Natural killer cell (primary cell): ENCODE measurements at regions of chr3 and their contacts with region 1.

Region 1: GRCh38 chr3:121749276-121750086 is at the start of gene GOLGB1:
- DNase-seq: peak; percentile 84 to 98
- ATAC-seq: peak; percentile 91 to 99 (median 93)
- H3K4me3 ChIP-seq: peak within 1 kb of the TSS; percentile 92
- H3K4me3 Mint-ChIP-seq: peak within 1 kb of the TSS; percentile 57
- H3K27ac ChIP-seq: peak within 1 kb of the TSS; percentile 98
- H3K27ac Mint-ChIP-seq: no peak within 1 kb of the TSS
- H3K4me1 ChIP-seq: peaks cover 12% of the 10 kb centered on the region
- H3K4me1 Mint-ChIP-seq: peaks cover 4 to 6% of the 10 kb centered on the region in 2 donors
- H3K27me3 ChIP-seq: no peaks in the 10 kb centered on the region
- H3K27me3 Mint-ChIP-seq: peaks cover 13 to 17% of the 10 kb centered on the region in 2 donors
- CTCF ChIP-seq: no peak
- total RNA-seq, gene GOLGB1: 55.4 to 67.2 (median 61.1) TPM

Region 2: GRCh38 chr3:121660356-121661171 is 88.9 kb before region 1 on chr3 and contains the start of gene HCLS1:
- intact Hi-C with region 1: loop called (anchors 1 kb)
- DNase-seq: peak; percentile 68 to 88
- ATAC-seq: peak; percentile 85 to 90 (median 85)
- H3K4me3 ChIP-seq: peak within 1 kb of the TSS; percentile 77
- H3K4me3 Mint-ChIP-seq: peak within 1 kb of the TSS; percentile 96
- H3K27ac ChIP-seq: peak within 1 kb of the TSS; percentile 94
- H3K27ac Mint-ChIP-seq: peak within 1 kb of the TSS; percentile 97 to 99
- H3K4me1 ChIP-seq: peaks cover 40% of the 10 kb centered on the region
- H3K4me1 Mint-ChIP-seq: peaks cover 56% of the 10 kb centered on the region in 2 donors
- H3K27me3 ChIP-seq: no peaks in the 10 kb centered on the region
- H3K27me3 Mint-ChIP-seq: no peaks in the 10 kb centered on the region
- CTCF ChIP-seq: no peak
- total RNA-seq, gene HCLS1: 331 to 356 (median 336) TPM

Region 3: DNA sequence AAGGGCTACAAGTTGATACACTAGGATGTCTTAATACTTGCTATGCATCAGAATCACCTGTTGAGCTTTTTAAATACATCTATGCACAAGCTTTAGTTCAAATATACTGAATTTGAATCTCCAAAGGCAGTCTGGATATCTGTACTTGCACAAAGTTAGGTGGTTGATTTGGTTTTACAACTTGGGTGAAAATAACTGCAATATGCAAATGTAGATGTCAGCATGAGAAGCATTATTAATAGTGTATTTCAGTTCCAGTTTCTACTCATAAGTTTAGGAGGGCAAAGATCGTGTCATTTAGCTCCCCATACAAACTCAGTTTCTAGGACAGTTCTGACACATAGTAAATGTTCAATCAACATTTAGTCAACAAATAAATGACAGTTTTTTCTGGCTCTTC is 59.8 kb after region 1 on chr3:
- intact Hi-C with region 1: no loop called
- DNase-seq: no peak
- ATAC-seq: no peak
- H3K4me3 ChIP-seq: no peak overlapping the region
- H3K4me3 Mint-ChIP-seq: no peak overlapping the region
- H3K27ac ChIP-seq: no peak overlapping the region
- H3K27ac Mint-ChIP-seq: no peak overlapping the region
- H3K4me1 ChIP-seq: no peaks in the 10 kb centered on the region
- H3K4me1 Mint-ChIP-seq: peaks cover 12 to 18% of the 10 kb centered on the region in 2 donors
- H3K27me3 ChIP-seq: no peaks in the 10 kb centered on the region
- H3K27me3 Mint-ChIP-seq: no peaks in the 10 kb centered on the region
- CTCF ChIP-seq: no peak

Region 4: GRCh38 chr3:121834696-121835464 is 85.4 kb after region 1 on chr3 and contains the starts of genes EAF2 and IQCB1:
- intact Hi-C with region 1: loop called (anchors 1 kb)
- DNase-seq: peak; percentile 95 to 99
- ATAC-seq: peak; percentile 97 to 100 (median 98)
- H3K4me3 ChIP-seq: peak within 1 kb of the TSS; percentile 83
- H3K4me3 Mint-ChIP-seq: peak within 1 kb of the TSS; percentile 98
- H3K27ac ChIP-seq: peak within 1 kb of the TSS; percentile 91
- H3K27ac Mint-ChIP-seq: peak within 1 kb of the TSS; percentile 92 to 97
- H3K4me1 ChIP-seq: peaks cover 14% of the 10 kb centered on the region
- H3K4me1 Mint-ChIP-seq: peaks cover 48 to 50% of the 10 kb centered on the region in 2 donors
- H3K27me3 ChIP-seq: no peaks in the 10 kb centered on the region
- H3K27me3 Mint-ChIP-seq: peaks cover 0 to 9% of the 10 kb centered on the region in 2 donors
- CTCF ChIP-seq: no peak
- total RNA-seq, gene EAF2: 5.1 to 7.4 (median 5.4) TPM
- total RNA-seq, gene IQCB1: 42.6 to 44.3 (median 42.6) TPM

Region 5: GRCh38 chr3:121871430-121871829 is 121.9 kb after region 1 on chr3:
- intact Hi-C with region 1: no loop called
- DNase-seq: no peak
- ATAC-seq: no peak
- H3K4me3 ChIP-seq: no peak overlapping the region
- H3K4me3 Mint-ChIP-seq: no peak overlapping the region
- H3K27ac ChIP-seq: no peak overlapping the region
- H3K27ac Mint-ChIP-seq: no peak overlapping the region
- H3K4me1 ChIP-seq: no peaks in the 10 kb centered on the region
- H3K4me1 Mint-ChIP-seq: no peaks in the 10 kb centered on the region
- H3K27me3 ChIP-seq: no peaks in the 10 kb centered on the region
- H3K27me3 Mint-ChIP-seq: no peaks in the 10 kb centered on the region
- CTCF ChIP-seq: no peak

Region 6: GRCh38 chr3:122299872-122300460 is 550.5 kb after region 1 on chr3:
- intact Hi-C with region 1: no loop called
- DNase-seq: peak in 1 of 2 donors; percentile 77
- ATAC-seq: peak in 1 of 3 donors; percentile 49
- H3K4me3 ChIP-seq: no peak overlapping the region
- H3K4me3 Mint-ChIP-seq: no peak overlapping the region
- H3K27ac ChIP-seq: no peak overlapping the region
- H3K27ac Mint-ChIP-seq: no peak overlapping the region
- H3K4me1 ChIP-seq: no peaks in the 10 kb centered on the region
- H3K4me1 Mint-ChIP-seq: no peaks in the 10 kb centered on the region
- H3K27me3 ChIP-seq: no peaks in the 10 kb centered on the region
- H3K27me3 Mint-ChIP-seq: peaks cover 0 to 5% of the 10 kb centered on the region in 2 donors
- CTCF ChIP-seq: peak; percentile 63

Region 7: GRCh38 chr3:122383771-122384697 is 634.6 kb after region 1 on chr3 and contains the start of gene FAM162A:
- intact Hi-C with region 1: loop called (anchors 10 kb)
- DNase-seq: peak; percentile 88 to 97
- ATAC-seq: peak; percentile 93 to 99 (median 95)
- H3K4me3 ChIP-seq: peak within 1 kb of the TSS; percentile 87
- H3K4me3 Mint-ChIP-seq: peak within 1 kb of the TSS; percentile 91
- H3K27ac ChIP-seq: peak within 1 kb of the TSS; percentile 74
- H3K27ac Mint-ChIP-seq: peak within 1 kb of the TSS; percentile 86 to 89
- H3K4me1 ChIP-seq: peaks cover 15% of the 10 kb centered on the region
- H3K4me1 Mint-ChIP-seq: peaks cover 23% of the 10 kb centered on the region in 2 donors
- H3K27me3 ChIP-seq: no peaks in the 10 kb centered on the region
- H3K27me3 Mint-ChIP-seq: no peaks in the 10 kb centered on the region
- CTCF ChIP-seq: peak; percentile 63
- total RNA-seq, gene FAM162A: 12.2 to 18.4 (median 16.3) TPM

Region 8: DNA sequence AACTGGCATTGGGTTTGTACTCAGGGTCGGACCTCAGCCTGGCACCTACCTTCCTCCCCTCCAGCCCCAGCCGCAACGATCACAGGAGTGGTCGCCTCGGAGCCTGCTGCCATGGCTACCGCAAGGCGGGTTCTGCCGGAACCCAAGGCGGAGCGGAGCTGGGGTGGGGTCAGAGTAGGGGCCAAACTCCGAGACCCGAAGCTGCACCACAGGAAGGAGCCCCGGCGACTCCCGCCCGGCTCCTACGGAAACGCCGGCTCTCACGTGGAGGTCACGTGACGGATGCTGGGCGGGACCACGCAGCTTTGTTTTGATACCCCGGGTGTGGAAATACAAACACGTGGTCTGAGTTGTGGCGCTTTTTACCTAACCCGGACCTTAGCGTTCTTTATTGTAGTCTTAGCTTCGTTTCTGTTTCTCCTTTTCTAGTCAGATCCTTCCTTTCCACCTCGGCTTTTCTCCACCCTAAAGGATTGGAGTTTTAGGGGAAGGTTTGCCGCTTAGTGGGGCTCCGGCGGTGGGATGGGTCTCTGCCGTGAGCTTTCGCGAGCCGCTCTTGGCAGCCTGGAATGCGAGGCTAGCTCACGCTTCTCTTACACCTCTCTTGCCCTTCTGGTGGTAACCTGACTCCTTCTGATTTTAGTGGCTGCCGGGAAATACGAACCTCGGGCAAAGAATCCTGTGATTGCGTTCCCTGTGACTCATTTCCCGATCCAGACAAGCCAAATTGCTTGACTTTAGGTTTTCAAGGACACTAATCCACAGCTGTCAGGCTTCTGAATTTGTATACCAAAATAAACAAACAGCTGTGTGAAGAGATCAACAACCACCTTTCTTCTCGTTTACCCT is 1044.3 kb after region 1 on chr3 and contains the start of gene HSPBAP1:
- intact Hi-C with region 1: loop called (anchors 2 kb)
- DNase-seq: peak; percentile 92 to 95
- ATAC-seq: peak; percentile 67 to 83 (median 78)
- H3K4me3 ChIP-seq: peak within 1 kb of the TSS; percentile 77
- H3K4me3 Mint-ChIP-seq: peak within 1 kb of the TSS; percentile 94
- H3K27ac ChIP-seq: peak within 1 kb of the TSS; percentile 96
- H3K27ac Mint-ChIP-seq: no peak within 1 kb of the TSS
- H3K4me1 ChIP-seq: peaks cover 21% of the 10 kb centered on the region
- H3K4me1 Mint-ChIP-seq: peaks cover 20 to 25% of the 10 kb centered on the region in 2 donors
- H3K27me3 ChIP-seq: no peaks in the 10 kb centered on the region
- H3K27me3 Mint-ChIP-seq: no peaks in the 10 kb centered on the region
- CTCF ChIP-seq: no peak
- total RNA-seq, gene HSPBAP1: 19.7 to 24.7 (median 23.4) TPM